Cardiac septum (tissue), 1 donor: ENCODE measurements at regions of chr10 and their contacts with region 1.

Region 1: DNA sequence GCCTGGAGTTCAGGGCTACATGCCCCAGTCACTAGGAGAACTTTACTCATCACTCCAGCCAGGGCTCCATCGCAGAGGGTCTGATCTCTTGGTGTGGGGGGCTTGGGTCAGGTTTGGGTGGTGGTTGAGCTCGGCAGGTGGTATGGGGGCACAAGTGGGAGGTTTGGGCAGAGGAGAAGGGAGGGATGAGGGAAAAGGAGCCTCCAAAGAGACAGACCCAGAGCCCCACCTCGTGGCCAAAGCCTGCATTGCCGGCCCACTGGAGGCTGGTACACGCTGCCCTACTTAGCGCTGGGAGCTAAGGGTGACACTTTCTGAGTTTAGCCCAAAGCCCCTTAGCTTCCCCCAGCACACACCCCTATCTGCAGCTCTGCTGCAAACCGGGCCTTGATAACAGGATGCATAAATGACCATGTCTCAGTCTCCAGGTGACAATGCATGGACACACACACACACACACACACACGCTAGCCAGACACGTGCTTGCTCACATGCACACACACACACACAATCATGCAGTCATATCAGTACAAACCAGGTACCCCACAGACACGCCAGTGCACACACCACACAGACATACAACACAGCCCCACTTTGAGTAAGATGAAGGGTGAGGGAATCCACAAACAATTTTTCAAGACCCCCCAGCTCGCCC is 14.7 kb downstream of the LZTS2 start:
- DNase-seq: peak; percentile 88

Region 2: DNA sequence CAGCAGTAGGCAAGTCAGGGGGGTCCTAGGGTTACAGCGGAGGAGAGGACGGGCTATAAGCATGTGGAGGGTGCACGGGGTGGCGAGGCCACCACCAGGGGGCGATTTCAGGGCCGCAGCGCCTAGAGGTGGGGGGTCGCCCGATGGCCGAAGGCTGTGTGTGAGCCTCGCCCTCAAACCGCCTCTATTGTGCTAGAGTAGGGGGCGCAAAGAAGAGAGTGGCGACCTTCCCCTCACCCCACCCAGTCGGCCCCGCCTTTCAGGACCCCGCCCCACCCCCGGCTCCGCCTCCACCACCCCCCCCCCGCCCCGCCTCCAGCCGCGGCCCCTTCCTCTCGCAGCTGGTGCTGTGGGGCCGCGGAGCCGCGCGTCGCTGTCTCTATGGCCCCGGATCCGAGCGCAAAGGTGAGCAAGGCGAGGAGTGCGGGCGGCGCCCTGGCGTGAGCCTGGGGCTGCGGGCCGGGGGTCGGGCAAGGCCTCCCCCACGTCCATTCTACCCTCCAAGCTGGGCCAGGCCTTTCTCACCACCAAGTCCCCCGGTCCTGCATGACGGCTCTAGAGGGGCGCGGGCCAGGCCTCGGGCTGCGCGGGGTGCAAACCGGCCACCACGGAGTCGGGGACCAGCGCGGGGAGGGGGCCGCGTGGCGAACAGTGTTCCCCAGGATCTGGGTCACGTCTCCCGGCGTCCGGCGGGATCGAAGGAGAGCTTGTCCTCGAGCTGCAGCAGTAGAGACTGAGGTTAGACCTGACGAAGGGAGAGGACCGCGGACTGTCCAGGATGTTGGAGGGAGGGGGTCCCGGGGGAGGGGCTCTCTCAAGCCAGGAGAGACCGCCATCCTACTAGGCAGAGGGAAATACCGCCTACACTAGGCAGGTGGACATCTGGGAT is 44.9 kb before region 1 on chr10 and contains the start of gene SEMA4G:
- intact Hi-C with region 1: loop called (anchors 2 kb)
- DNase-seq: no peak
- total RNA-seq, gene SEMA4G: 1.0 TPM